Mammary epithelial cell (primary cell): ENCODE measurements at regions of chr3 and their contacts with region 1.

Region 1: DNA sequence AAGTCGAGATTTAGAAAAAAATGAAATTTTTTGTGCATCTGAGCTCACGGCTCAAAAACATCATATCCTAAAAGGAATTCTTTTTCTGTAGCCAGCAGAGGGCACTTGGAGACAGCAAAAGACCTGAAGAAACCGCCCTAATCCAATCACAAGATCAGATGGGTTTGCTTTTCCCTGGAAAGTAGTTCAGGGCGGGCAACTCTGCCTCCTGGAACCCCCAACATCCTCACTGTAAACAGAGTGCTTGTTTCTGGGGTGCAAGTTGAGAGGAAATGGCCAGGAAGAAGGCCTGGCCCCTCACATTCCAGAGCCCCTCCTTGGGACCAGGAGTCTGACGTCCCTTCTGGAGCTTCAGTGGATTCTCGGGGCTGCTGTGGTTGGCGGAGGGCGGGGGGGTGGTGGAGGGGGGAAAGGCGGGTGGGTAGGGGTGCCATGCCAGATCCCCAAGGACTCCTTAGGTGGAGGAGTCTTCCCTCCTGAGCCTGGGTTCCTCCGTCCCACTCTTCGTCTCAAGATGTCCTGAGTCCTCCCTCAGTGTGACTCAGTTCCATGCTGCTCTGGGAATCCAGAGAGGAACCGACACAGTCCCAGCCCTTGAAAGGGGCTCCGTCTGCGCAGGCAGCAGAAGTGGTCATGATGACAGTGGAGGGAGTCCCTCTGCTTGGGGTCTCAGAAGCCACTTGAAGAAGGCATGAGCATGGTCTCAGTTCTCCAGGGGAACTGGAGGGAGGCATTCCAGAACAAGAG is 35.9 kb downstream of the CCK start:
- DNase-seq: peak; percentile 45
- H3K4me3 ChIP-seq: no peak overlapping the region
- H3K27ac ChIP-seq: no peak overlapping the region
- H3K4me1 ChIP-seq: peaks cover 9% of the 10 kb centered on the region
- H3K27me3 ChIP-seq: no peaks in the 10 kb centered on the region
- CTCF ChIP-seq: peak; percentile 51 to 65

Region 2: GRCh38 chr3:41893977-41894376 is 336.1 kb before region 1 on chr3:
- CTCF ChIA-PET with region 1: interaction called, 3 read pairs
- dilution Hi-C with region 1: no loop called
- in situ Hi-C with region 1: no loop called
- intact Hi-C with region 1: loop called (anchors 1 kb)
- DNase-seq: peak; percentile 36
- H3K4me3 ChIP-seq: no peak overlapping the region
- H3K27ac ChIP-seq: no peak overlapping the region
- H3K4me1 ChIP-seq: no peaks in the 10 kb centered on the region
- H3K27me3 ChIP-seq: no peaks in the 10 kb centered on the region
- CTCF ChIP-seq: peak; percentile 29 to 54

Region 3: DNA sequence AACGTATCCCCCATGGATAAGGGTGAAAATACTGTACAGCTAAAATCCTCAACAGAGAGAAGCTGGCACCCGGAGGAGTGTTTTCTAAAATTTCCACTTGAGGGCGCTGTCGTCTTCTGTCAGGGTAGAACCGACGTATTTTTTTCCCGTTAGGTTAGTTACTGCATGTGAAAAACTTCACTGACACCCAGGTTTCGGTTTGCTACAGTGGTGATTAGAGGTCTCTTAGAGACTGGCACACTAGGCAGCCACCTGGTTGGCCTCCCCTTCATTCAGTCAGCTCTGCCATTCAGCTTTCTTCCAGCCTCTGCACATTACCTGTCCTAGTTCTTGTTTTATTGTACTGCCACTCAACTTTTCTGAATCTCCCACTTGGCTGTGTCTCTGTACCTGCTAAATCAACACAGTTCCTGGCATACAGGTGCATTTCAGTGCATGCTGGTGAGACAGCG is 17.5 kb after region 1 on chr3:
- CTCF ChIA-PET with region 1: interaction called, 3 read pairs
- dilution Hi-C with region 1: no loop called
- in situ Hi-C with region 1: no loop called
- intact Hi-C with region 1: loop called (anchors 1 kb)
- DNase-seq: peak; percentile 50
- H3K4me3 ChIP-seq: no peak overlapping the region
- H3K27ac ChIP-seq: no peak overlapping the region
- H3K4me1 ChIP-seq: peaks cover 6% of the 10 kb centered on the region
- H3K27me3 ChIP-seq: no peaks in the 10 kb centered on the region
- CTCF ChIP-seq: peak; percentile 70 to 74

Region 4: DNA sequence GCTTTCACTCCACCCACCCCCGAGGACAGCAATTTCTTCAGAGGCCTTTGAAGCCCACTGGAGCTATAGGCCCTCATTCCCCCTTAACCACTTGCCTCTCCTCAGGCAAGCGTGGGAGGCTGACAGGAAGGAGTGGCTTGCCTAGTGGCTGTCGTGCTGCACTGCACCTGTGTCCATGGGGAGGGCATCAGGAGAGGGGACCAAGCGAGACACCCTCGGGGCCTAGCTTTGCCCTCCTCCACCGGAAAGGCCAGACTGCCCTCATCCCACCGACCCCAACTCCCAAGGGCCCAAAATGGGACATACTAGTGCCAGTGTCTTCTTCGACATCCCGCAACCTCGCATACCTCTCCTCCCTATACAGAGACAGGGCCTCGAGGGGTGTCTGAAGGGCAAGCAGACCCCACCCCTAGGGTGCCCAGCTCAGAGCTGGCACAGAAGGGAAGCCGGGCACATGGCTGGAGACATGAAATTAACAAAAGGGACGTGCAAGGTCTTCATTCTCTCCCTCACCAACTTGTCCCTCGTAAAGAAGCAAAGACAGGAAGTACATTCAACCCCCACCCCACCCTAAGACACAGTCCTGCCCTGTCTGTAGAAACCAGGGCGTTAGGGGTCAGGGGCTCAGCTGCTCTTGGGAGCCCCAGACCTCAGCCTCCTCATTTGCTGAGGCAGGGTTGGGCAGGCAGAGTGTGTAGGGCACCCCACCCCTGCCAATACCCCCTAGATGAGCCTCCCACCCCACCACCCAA is 296.7 kb after region 1 on chr3:
- CTCF ChIA-PET with region 1: no interaction called
- dilution Hi-C with region 1: loop called (anchors 10 kb)
- in situ Hi-C with region 1: loop called in 1 of 2 experiments (anchors 25 kb)
- intact Hi-C with region 1: no loop called
- DNase-seq: no peak
- H3K4me3 ChIP-seq: no peak overlapping the region
- H3K27ac ChIP-seq: no peak overlapping the region
- H3K4me1 ChIP-seq: peaks cover 2% of the 10 kb centered on the region
- H3K27me3 ChIP-seq: no peaks in the 10 kb centered on the region
- CTCF ChIP-seq: no peak

Region 5: DNA sequence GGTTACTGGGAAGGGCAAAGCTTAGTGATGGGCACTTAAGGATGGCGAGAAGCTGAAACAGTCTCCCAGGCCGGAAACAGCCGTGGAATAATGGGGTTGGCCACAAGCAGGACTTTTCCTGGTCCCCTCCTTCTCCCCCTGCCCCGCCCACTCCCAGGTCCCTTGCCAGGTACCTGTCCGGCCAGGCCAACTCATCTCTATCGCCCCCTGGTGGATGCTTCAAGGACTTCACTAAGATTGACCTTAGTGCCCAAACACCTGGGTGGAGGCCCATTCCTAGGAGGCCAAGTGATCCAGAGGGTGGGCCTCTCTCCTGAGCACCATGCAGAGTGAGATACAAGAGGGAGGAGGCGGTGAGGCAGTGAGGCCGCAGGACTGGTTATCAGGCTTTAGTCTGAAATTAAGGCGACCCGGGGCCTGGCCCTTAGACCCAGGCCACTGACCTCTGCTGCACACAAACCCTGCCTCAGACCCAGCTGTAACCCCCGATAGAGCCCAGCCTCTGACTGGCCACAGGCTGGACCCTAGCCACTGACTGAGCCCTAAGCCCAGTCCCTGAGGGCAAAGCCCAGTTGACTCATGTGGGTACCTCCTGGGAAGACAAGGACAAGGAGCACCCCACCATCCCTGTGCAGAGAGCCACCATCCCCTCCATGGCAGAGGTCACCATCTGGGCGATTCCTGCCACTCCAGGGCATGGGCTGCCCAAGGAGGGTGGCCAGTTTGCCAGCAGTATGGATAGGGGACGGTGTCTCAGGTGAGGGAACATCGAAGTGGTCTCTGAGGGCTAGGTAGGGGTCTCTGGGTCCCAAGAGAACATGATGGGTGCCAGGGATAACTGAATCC is 310.0 kb after region 1 on chr3:
- CTCF ChIA-PET with region 1: no interaction called
- dilution Hi-C with region 1: no loop called
- in situ Hi-C with region 1: loop called in 1 of 2 experiments (anchors 25 kb)
- intact Hi-C with region 1: loop called (anchors 1 kb)
- DNase-seq: peak; percentile 24
- H3K4me3 ChIP-seq: no peak overlapping the region
- H3K27ac ChIP-seq: no peak overlapping the region
- H3K4me1 ChIP-seq: no peaks in the 10 kb centered on the region
- H3K27me3 ChIP-seq: no peaks in the 10 kb centered on the region
- CTCF ChIP-seq: peak; percentile 60 to 87

Region 6: GRCh38 chr3:42547401-42547945 is 317.4 kb after region 1 on chr3:
- CTCF ChIA-PET with region 1: interaction called, 3 read pairs
- dilution Hi-C with region 1: no loop called
- in situ Hi-C with region 1: loop called in 1 of 2 experiments (anchors 25 kb)
- intact Hi-C with region 1: loop called (anchors 1 kb)
- DNase-seq: peak; percentile 36
- H3K4me3 ChIP-seq: no peak overlapping the region
- H3K27ac ChIP-seq: no peak overlapping the region
- H3K4me1 ChIP-seq: no peaks in the 10 kb centered on the region
- H3K27me3 ChIP-seq: no peaks in the 10 kb centered on the region
- CTCF ChIP-seq: peak; percentile 94 to 98